Endothelial cell of umbilical vein (primary cell): ENCODE measurements at regions of chr4 and their contacts with region 1.

Region 1: GRCh38 chr4:109302361-109303139 is at the start of gene COL25A1:
- DNase-seq: peak; percentile 60
- H3K4me3 ChIP-seq: peak within 1 kb of the TSS; percentile 12 to 75 (median 38)
- H3K27ac ChIP-seq: no peak within 1 kb of the TSS
- H3K4me1 ChIP-seq: peaks cover 16% of the 10 kb centered on the region
- H3K27me3 ChIP-seq: peaks cover 22 to 42% of the 10 kb centered on the region in 2 experiments
- CTCF ChIP-seq: no peak
- POLR2A ChIP-seq: no peak
- total RNA-seq, gene COL25A1: 3.5 and 3.9 TPM in 2 replicates

Region 2: DNA sequence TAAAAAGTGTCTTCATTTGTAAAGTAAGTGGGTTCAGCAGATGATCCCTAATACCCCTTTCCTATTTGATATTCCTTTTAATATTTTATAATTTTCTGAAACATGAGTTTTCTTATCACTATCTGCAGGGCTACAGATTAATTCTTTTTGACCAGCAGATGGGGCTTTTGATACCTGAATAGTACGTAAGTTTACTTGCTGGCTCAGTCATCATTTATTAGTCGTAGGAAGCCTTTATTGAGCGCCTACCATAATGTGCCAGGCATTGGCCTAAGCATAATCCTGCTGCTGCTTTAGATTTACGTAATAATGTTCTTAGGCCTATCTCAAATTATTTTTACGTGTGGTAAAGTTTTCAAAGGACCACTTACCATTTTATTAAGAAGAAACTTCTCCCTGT is 619.1 kb before region 1 on chr4:
- CTCF ChIA-PET with region 1: interaction called, 4 read pairs
- POLR2A ChIA-PET with region 1: no interaction called
- dilution Hi-C with region 1: no loop called
- intact Hi-C with region 1: loop called (anchors 10 kb)
- DNase-seq: peak; percentile 51
- H3K4me3 ChIP-seq: no peak overlapping the region
- H3K27ac ChIP-seq: no peak overlapping the region
- H3K4me1 ChIP-seq: peaks cover 4% of the 10 kb centered on the region
- H3K27me3 ChIP-seq: no peaks in the 10 kb centered on the region
- CTCF ChIP-seq: peak in 1 of 2 donors; percentile 24
- POLR2A ChIP-seq: no peak

Region 3: DNA sequence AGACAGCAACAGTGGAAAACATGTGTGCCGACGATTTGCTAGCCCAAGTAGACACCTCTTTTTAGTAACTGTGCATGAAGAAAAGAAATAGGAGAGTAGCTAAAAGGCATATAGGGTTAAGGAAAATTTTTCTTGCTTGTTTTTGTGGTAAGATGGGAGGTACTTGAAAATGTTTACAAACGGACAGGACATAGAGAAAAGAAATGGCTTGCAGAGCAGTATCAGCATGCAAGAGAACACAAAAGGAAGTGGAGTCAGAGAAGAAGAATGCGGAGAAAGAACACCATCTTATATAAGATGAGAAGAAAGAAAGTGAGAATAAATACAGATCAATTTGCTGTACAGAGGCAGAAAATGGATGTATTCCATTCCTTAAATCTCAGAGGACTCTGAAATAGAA is 276.0 kb before region 1 on chr4:
- CTCF ChIA-PET with region 1: no interaction called
- POLR2A ChIA-PET with region 1: no interaction called
- dilution Hi-C with region 1: no loop called
- intact Hi-C with region 1: loop called (anchors 2 kb)
- DNase-seq: peak; percentile 56
- H3K4me3 ChIP-seq: peak overlapping the region in 1 of 3 experiments; percentile 46
- H3K27ac ChIP-seq: peak overlapping the region; percentile 86
- H3K4me1 ChIP-seq: peaks cover 23% of the 10 kb centered on the region
- H3K27me3 ChIP-seq: no peaks in the 10 kb centered on the region
- CTCF ChIP-seq: no peak
- POLR2A ChIP-seq: no peak

Region 4: DNA sequence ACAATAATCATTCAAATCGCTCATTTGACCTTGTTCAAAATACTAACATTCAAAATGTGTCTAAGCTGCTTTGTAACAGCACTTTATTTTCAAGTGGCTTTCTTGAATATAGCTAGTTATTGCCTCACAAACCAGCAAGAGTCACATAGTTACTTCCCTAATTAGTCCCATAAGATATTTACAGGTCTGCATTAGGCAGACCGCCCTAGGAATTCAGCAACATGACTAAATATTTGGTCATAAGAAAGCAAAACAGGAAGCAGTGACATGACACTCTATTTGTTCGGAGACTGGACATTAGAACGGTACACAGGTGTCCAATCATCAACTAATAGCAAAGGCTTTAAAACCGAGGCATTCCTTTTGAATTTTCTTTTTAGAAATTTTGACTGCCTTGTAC is 262.1 kb before region 1 on chr4:
- CTCF ChIA-PET with region 1: no interaction called
- POLR2A ChIA-PET with region 1: no interaction called
- dilution Hi-C with region 1: no loop called
- intact Hi-C with region 1: no loop called
- DNase-seq: no peak
- H3K4me3 ChIP-seq: no peak overlapping the region
- H3K27ac ChIP-seq: no peak overlapping the region
- H3K4me1 ChIP-seq: peaks cover 19% of the 10 kb centered on the region
- H3K27me3 ChIP-seq: no peaks in the 10 kb centered on the region
- CTCF ChIP-seq: no peak
- POLR2A ChIP-seq: no peak

Region 5: GRCh38 chr4:109078724-109079123 is 223.8 kb before region 1 on chr4:
- CTCF ChIA-PET with region 1: interaction called, 5 read pairs
- POLR2A ChIA-PET with region 1: no interaction called
- dilution Hi-C with region 1: no loop called
- intact Hi-C with region 1: loop called (anchors 5 kb)
- DNase-seq: peak; percentile 48
- H3K4me3 ChIP-seq: no peak overlapping the region
- H3K27ac ChIP-seq: no peak overlapping the region
- H3K4me1 ChIP-seq: peaks cover 18% of the 10 kb centered on the region
- H3K27me3 ChIP-seq: no peaks in the 10 kb centered on the region
- CTCF ChIP-seq: no peak
- POLR2A ChIP-seq: no peak

Region 6: DNA sequence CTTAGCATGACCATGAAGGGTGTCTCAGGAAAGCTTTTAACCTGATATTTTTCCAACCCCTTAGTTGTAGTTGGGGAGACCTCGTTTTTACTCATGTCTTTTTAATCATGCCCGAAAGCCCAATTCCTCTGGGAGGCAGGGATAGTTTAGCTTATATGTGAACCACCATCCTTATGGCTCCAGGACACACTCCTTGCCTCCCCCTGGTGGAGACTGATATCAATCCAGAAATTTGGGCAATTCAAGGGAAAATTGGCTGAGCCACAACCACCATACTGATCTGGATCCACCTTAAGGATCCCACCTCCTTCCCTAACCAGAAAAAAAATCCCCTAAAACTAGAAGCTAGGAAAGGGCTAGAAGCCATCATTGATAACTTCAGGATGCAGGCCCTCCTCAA is 13.3 kb after region 1 on chr4:
- CTCF ChIA-PET with region 1: interaction called, 13 read pairs
- POLR2A ChIA-PET with region 1: no interaction called
- dilution Hi-C with region 1: no loop called
- intact Hi-C with region 1: no loop called
- DNase-seq: peak; percentile 13
- H3K4me3 ChIP-seq: no peak overlapping the region
- H3K27ac ChIP-seq: no peak overlapping the region
- H3K4me1 ChIP-seq: no peaks in the 10 kb centered on the region
- H3K27me3 ChIP-seq: peaks cover 0 to 2% of the 10 kb centered on the region in 2 experiments
- CTCF ChIP-seq: peak; percentile 27 to 37
- POLR2A ChIP-seq: no peak

Region 7: GRCh38 chr4:109406338-109406931 is 103.9 kb after region 1 on chr4:
- CTCF ChIA-PET with region 1: interaction called, 9 read pairs
- POLR2A ChIA-PET with region 1: no interaction called
- dilution Hi-C with region 1: no loop called
- intact Hi-C with region 1: loop called (anchors 2 kb)
- DNase-seq: peak; percentile 75
- H3K4me3 ChIP-seq: no peak overlapping the region
- H3K27ac ChIP-seq: no peak overlapping the region
- H3K4me1 ChIP-seq: no peaks in the 10 kb centered on the region
- H3K27me3 ChIP-seq: no peaks in the 10 kb centered on the region
- CTCF ChIP-seq: peak; percentile 51 to 53
- POLR2A ChIP-seq: no peak